ENCODE measurements at regions of chr3 and their contacts with region 1.

Region 1: GRCh38 chr3:197256836-197257444 is 41.5 kb downstream of the DLG1 start:
- DNase-seq: peak; percentile 65
- ATAC-seq: no peak
- H3K4me3 Mint-ChIP-seq: no peak overlapping the region
- H3K27ac Mint-ChIP-seq: no peak overlapping the region
- H3K4me1 Mint-ChIP-seq: peaks cover 73% of the 10 kb centered on the region
- H3K27me3 Mint-ChIP-seq: no peaks in the 10 kb centered on the region
- CTCF ChIP-seq: peak; percentile 79

Region 2: GRCh38 chr3:197029511-197030167 is 227.3 kb before region 1 on chr3 and contains the start of gene MELTF:
- CTCF ChIA-PET with region 1: no interaction called
- POLR2A ChIA-PET with region 1: no interaction called
- intact Hi-C with region 1: no loop called
- DNase-seq: peak; percentile 70
- ATAC-seq: peak; percentile 93
- H3K4me3 Mint-ChIP-seq: peak within 1 kb of the TSS; percentile 73
- H3K27ac Mint-ChIP-seq: no peak within 1 kb of the TSS
- H3K4me1 Mint-ChIP-seq: peaks cover 4% of the 10 kb centered on the region
- H3K27me3 Mint-ChIP-seq: peaks cover 15% of the 10 kb centered on the region
- CTCF ChIP-seq: peak; percentile 95
- total RNA-seq, gene MELTF: 3.4 to 3.5 TPM

Region 3: DNA sequence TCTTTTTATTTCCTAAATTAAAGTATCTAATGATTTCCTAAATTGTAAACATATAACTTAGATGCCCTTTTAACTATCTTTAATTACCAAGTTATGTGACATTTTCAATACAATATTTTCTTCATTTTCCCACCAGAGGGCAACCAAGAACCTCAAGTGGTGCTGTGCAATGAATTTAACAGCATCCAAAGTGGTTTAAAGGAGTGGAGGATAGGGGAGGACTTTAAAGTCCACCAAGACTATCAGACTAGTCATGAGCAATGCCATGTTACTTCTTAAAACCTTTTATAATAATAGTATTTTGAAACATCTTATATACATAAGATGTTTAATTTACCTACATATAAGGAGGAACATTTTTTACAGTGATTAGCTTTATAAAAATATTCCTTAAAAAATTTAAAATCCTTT is 32.9 kb before region 1 on chr3:
- CTCF ChIA-PET with region 1: interaction called, 42 read pairs
- POLR2A ChIA-PET with region 1: interaction called, 3 read pairs
- intact Hi-C with region 1: no loop called
- DNase-seq: no peak
- ATAC-seq: peak; percentile 69
- H3K4me3 Mint-ChIP-seq: no peak overlapping the region
- H3K27ac Mint-ChIP-seq: no peak overlapping the region
- H3K4me1 Mint-ChIP-seq: peaks cover 28% of the 10 kb centered on the region
- H3K27me3 Mint-ChIP-seq: no peaks in the 10 kb centered on the region
- CTCF ChIP-seq: peak; percentile 66

Region 4: GRCh38 chr3:197268294-197268693 is 11.4 kb after region 1 on chr3:
- CTCF ChIA-PET with region 1: interaction called, 23 read pairs
- POLR2A ChIA-PET with region 1: no interaction called
- intact Hi-C with region 1: no loop called
- DNase-seq: no peak
- ATAC-seq: no peak
- H3K4me3 Mint-ChIP-seq: no peak overlapping the region
- H3K27ac Mint-ChIP-seq: no peak overlapping the region
- H3K4me1 Mint-ChIP-seq: peaks cover 40% of the 10 kb centered on the region
- H3K27me3 Mint-ChIP-seq: no peaks in the 10 kb centered on the region
- CTCF ChIP-seq: no peak

Region 5: DNA sequence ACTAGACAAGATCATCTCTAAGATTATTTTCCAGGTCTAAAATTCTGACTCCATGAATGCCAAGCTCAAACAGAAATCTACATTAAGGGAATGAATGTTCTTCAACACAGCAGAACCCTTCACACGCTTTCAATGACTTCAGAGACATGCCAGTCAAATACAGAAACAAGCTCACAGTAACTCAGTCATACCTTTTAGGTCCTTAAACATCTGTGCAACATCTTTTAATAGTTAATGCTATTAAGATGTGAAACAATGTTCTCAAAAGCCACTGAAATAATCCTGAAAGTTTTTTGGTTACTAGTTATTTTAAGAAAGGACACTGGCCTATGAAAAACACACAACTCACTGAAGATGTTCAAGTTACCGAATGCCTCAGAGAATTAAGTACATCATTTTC is 38.9 kb after region 1 on chr3:
- CTCF ChIA-PET with region 1: interaction called, 12 read pairs
- POLR2A ChIA-PET with region 1: no interaction called
- intact Hi-C with region 1: no loop called
- DNase-seq: no peak
- ATAC-seq: no peak
- H3K4me3 Mint-ChIP-seq: peak overlapping the region; percentile 31
- H3K27ac Mint-ChIP-seq: peak overlapping the region; percentile 27
- H3K4me1 Mint-ChIP-seq: peaks cover 45% of the 10 kb centered on the region
- H3K27me3 Mint-ChIP-seq: peaks cover 13% of the 10 kb centered on the region
- CTCF ChIP-seq: no peak

Region 6: GRCh38 chr3:197456261-197457091 is 199.5 kb after region 1 on chr3:
- CTCF ChIA-PET with region 1: interaction called, 55 read pairs
- POLR2A ChIA-PET with region 1: no interaction called
- intact Hi-C with region 1: loop called (anchors 10 kb)
- DNase-seq: peak; percentile 68
- ATAC-seq: peak; percentile 63
- H3K4me3 Mint-ChIP-seq: peak overlapping the region; percentile 79
- H3K27ac Mint-ChIP-seq: peak overlapping the region; percentile 91
- H3K4me1 Mint-ChIP-seq: peaks cover 14% of the 10 kb centered on the region
- H3K27me3 Mint-ChIP-seq: peaks cover 6% of the 10 kb centered on the region
- CTCF ChIP-seq: no peak

Region 7: GRCh38 chr3:197508924-197509775 is 252.2 kb after region 1 on chr3:
- CTCF ChIA-PET with region 1: interaction called, 22 read pairs
- POLR2A ChIA-PET with region 1: no interaction called
- intact Hi-C with region 1: loop called (anchors 5 kb)
- DNase-seq: no peak
- ATAC-seq: no peak
- H3K4me3 Mint-ChIP-seq: no peak overlapping the region
- H3K27ac Mint-ChIP-seq: no peak overlapping the region
- H3K4me1 Mint-ChIP-seq: peaks cover 6% of the 10 kb centered on the region
- H3K27me3 Mint-ChIP-seq: no peaks in the 10 kb centered on the region
- CTCF ChIP-seq: no peak